Breast epithelium (tissue), 4 donors: ENCODE measurements at regions of chr5 and their contacts with region 1.

Region 1: DNA sequence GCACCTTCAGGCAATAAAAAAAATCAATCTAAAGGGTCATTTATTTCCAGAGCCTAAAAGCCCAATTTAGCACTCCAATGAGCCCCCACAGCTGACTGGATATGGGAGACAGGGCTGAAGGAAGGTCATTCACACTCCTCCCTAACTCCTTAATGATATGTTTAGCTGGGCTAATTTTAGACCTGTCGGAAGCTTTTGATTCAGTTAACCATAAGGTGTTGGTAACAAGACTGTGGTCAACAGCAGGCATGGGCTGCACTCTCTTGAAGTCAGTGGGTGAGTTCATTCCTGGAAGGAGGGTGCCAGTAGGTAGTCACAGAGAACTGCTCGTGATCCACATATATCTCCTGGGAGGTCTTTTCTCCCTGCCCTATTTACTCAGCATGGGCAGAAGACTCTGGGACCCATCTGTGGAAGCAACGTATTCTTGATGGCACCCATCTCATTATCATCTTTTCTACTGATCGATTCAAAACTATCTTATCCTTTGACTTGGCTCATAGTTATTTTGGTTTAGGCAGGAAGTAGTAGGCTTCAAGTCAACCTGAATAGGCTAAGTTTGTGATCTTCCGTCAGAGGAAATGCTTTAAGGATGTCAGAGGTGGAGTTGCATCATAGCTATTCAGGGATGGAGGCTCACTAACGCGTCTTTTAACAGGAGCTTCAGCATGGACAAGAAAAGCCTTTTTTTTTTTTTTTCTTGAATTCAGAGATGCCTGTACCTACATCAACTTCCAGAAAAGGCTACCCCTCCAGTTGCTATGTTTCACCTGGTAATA is 367.7 kb upstream of the SLC30A5 start:
- DNase-seq: no peak
- H3K4me3 ChIP-seq: no peak overlapping the region
- H3K27ac ChIP-seq: no peak overlapping the region
- H3K4me1 ChIP-seq: no peaks in the 10 kb centered on the region
- H3K27me3 ChIP-seq: no peaks in the 10 kb centered on the region
- CTCF ChIP-seq: no peak
- POLR2A ChIP-seq: no peak

Region 2: DNA sequence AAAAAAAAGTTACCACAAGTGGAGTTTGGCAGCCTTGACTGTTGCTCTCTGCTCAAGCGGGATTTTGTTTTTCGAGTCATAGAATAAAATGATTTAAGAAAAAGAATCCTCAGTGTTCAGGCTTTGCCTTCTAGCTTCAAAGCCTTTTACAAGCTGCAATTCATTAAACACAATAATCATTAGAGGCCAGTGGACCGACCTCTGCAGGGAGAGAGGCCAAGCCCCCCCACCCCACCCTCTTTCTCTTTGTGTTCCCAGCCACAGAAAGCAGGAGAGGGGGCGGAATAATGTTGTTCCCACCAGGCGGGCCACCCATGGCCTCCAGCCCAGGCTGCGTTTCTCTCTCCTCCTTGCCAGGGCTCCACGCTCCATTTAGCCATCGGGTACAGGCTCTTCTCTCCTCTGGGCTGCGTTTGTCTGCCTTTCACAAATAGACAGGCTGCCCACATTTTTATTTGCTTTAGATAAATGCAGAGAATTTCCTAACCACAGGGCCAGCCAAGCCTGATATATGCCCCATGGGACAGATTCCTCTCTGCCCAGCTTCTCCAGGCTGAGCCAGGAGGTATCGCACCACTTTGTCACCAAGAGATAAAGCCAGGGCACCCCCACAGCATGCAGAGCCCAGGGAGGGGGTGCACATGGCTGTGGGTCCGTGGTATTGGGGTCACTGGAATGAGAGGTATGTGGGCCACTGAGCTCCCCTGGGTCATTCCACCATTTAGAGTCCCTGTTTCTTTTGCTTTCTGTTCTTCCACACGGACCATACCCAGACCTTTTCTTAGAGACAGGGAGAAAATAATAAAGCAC is 191.8 kb before region 1 on chr5:
- intact Hi-C with region 1: loop called (anchors 5 kb)
- DNase-seq: no peak
- H3K4me3 ChIP-seq: peak overlapping the region in 2 of 3 donors; percentile 26 to 49
- H3K27ac ChIP-seq: peak overlapping the region; percentile 81 to 88
- H3K4me1 ChIP-seq: peaks cover 7 to 10% of the 10 kb centered on the region in 2 donors
- H3K27me3 ChIP-seq: no peaks in the 10 kb centered on the region
- CTCF ChIP-seq: no peak
- POLR2A ChIP-seq: no peak

Region 3: DNA sequence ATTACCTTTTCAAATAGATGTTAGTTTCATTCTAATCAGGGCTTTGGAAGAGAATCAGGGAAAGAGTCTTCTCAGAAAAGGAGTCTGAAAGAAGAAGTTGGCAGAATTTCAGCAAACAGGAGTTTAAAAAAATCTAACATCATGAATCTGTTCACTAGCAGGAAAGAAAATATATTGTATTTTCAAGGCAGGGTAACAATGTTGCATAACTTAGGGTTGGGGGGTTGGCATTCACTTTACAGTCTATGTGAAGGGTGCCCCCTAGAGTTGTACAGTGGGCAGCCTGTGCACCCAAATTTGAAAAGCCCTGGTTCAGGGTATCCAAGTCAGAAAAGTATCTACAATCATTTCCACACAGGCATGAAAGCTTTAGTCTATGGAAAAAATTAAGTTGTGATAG is 19.4 kb after region 1 on chr5:
- intact Hi-C with region 1: no loop called
- DNase-seq: no peak
- H3K4me3 ChIP-seq: no peak overlapping the region
- H3K27ac ChIP-seq: no peak overlapping the region
- H3K4me1 ChIP-seq: peaks cover 0 to 11% of the 10 kb centered on the region in 2 donors
- H3K27me3 ChIP-seq: no peaks in the 10 kb centered on the region
- CTCF ChIP-seq: no peak
- POLR2A ChIP-seq: no peak

Region 4: DNA sequence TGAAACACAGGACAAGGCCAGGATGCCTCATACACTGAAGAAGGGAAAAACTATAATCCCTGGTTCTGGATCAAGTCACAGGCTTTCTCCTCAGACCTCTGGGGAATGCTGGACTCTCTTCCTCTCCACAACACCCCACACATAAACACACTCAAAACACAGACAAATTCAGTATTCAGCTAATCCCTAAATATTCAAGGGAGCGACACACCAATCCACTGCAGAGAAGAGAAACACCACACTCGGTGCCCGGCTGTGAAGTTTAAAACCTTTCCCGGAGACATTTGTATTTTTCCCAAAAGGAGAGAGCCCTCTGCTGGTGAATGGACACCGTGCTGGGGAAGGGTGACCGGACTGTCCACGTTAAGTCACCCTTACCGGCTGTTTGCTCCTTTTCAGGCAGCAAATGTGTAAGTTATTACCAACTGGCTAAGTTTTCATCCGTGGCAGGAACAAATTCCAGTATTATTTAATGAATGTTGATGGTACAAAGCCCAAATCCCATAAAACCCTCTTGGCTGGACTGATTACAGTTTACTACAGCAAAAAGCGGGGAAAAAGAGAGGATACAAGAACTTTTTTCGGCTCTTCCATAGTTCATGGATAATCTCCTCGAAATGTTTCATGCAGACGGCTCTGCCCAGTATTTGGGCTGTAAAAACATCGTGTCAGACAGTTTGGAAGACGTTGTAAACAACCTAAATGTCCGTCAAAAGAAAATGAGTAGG is 236.8 kb after region 1 on chr5:
- intact Hi-C with region 1: no loop called
- DNase-seq: peak; percentile 62 to 65
- H3K4me3 ChIP-seq: peak overlapping the region in 1 of 3 donors; percentile 44
- H3K27ac ChIP-seq: peak overlapping the region; percentile 12 to 76
- H3K4me1 ChIP-seq: no peaks in the 10 kb centered on the region
- H3K27me3 ChIP-seq: no peaks in the 10 kb centered on the region
- CTCF ChIP-seq: peak; percentile 60 to 89 (median 80)
- POLR2A ChIP-seq: no peak